OCI-LY7 (cell line): ENCODE measurements at regions of chr9 and their contacts with region 1.

Region 1: DNA sequence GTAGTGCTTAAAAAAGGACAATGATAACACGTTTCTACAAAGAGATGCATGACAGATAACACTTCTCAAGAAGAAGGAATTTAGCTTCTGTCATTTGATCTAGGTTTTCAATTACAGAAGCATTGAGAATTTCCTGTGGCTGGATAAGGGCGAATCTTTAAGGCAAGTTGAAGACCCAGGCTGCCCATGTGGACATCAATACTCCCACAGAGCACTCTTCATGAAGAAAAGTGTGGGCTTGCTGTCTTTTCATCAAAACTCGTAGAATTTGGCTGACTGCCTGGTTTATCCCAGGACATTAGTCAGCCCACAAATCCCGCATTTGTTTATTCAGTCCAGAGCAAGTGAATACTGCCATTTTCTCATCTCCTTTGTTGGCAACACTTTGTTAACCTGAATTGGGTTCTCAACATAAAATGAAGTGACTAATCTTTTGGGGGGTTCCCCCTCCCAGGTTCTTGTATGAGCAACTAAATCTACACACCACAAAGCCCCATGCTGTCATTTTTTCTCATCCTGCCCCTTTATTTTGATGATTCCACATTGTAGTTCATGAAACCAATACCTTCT is 43.4 kb upstream of the CDKN2B start:
- DNase-seq: no peak
- H3K4me3 ChIP-seq: no peak overlapping the region
- H3K27ac ChIP-seq: no peak overlapping the region
- H3K4me1 ChIP-seq: peaks cover 13% of the 10 kb centered on the region
- CTCF ChIP-seq: no peak

Region 2: DNA sequence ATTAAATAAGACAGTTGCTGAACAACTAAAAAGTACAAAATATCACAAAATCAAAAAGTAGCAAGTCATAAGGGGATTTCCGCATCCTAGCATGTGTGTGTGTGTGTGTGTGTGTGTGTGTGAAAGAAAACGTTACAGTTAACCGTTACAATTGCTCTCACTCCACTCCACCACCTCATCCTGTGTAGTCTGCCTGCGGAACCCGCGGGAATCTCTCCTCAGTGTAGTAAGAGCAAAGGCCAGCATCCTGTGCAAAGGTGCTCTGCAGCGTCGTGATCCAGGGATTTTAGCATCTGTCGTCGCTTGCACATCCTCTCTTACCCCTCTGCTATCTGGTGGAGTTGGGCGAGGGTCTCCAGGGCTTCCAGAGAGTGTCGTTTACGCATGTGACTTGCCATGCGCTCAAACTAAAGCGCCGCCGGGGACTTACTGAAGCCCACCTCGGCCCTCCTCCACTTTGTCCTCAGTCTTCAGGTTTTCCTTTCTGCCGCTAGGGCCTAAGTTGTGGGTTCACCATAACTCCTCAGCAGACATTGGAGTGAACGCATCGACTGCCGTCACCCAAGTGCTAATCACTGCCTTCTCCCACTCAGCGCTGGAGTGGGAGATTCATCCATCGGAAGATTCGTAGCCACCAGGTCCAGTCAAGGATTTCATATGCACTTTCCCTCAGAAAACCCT is 47.3 kb before region 1 on chr9:
- CTCF ChIA-PET with region 1: no interaction called
- POLR2A ChIA-PET with region 1: no interaction called
- intact Hi-C with region 1: no loop called
- DNase-seq: peak; percentile 47
- H3K4me3 ChIP-seq: peak overlapping the region; percentile 50
- H3K27ac ChIP-seq: no peak overlapping the region
- H3K4me1 ChIP-seq: peaks cover 57% of the 10 kb centered on the region
- CTCF ChIP-seq: peak; percentile 29; the same call in 1 of the 2 replicates

Region 3: DNA sequence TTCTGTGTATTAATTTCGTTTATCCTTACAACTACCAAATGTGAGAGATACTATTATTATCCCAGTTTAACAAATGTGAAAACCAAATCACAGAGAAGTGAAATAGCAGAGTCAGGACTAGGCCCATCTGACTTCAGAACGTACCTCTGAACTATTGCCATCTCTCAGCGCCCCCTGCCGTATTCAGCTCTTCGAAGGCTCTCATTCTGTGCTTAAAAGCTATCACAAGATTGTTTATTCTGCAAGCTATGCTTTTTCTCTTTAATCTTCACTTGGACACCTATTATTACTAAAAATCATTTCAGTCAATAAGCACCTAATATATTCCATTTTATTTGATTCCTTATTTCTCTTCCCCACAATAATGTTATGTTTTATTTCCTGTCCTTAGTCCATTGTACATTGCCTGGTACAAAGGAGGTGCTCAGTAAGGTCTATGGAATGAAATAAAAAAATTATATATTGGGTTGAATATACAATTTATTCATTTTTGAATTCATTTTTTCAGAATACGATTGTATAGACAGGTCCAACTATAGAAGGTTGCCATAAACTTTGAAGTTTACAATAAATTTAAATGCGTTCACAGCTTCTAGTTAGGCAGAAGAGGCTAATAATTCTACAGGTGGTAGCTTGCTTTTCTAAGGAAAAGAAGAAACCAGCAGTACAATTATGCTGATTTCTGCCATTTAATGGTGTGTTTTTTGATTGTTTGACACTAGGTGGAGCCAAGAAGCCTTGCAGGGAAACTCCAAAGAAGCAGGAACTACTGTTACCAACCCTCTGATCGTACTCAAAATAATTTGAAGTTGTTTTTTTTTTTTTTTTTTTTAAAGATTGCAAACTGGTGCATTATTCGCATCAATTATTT is 191.9 kb after region 1 on chr9:
- CTCF ChIA-PET with region 1: interaction called, 3 read pairs
- POLR2A ChIA-PET with region 1: interaction called, 4 read pairs
- intact Hi-C with region 1: loop called (anchors 5 kb)
- DNase-seq: peak; percentile 70
- H3K4me3 ChIP-seq: no peak overlapping the region
- H3K27ac ChIP-seq: no peak overlapping the region
- H3K4me1 ChIP-seq: peaks cover 29% of the 10 kb centered on the region
- CTCF ChIP-seq: peak; percentile 77